ENCODE measurements at regions of chr12 and their contacts with region 1.

Region 1: GRCh38 chr12:70190262-70191010 is 52.8 kb upstream of the CNOT2 start:
- DNase-seq: peak; percentile 4
- H3K27ac ChIP-seq: no peak overlapping the region
- CTCF ChIP-seq: no peak

Region 2: GRCh38 chr12:69966409-69967207 is 223.8 kb before region 1 on chr12:
- CTCF ChIA-PET with region 1: interaction called, 5 read pairs
- POLR2A ChIA-PET with region 1: interaction called, 11 read pairs
- DNase-seq: peak; percentile 83
- H3K27ac ChIP-seq: peak overlapping the region; percentile 71
- CTCF ChIP-seq: no peak